T-cell (primary cell): ENCODE measurements at regions of chr1 and their contacts with region 1.

Region 1: DNA sequence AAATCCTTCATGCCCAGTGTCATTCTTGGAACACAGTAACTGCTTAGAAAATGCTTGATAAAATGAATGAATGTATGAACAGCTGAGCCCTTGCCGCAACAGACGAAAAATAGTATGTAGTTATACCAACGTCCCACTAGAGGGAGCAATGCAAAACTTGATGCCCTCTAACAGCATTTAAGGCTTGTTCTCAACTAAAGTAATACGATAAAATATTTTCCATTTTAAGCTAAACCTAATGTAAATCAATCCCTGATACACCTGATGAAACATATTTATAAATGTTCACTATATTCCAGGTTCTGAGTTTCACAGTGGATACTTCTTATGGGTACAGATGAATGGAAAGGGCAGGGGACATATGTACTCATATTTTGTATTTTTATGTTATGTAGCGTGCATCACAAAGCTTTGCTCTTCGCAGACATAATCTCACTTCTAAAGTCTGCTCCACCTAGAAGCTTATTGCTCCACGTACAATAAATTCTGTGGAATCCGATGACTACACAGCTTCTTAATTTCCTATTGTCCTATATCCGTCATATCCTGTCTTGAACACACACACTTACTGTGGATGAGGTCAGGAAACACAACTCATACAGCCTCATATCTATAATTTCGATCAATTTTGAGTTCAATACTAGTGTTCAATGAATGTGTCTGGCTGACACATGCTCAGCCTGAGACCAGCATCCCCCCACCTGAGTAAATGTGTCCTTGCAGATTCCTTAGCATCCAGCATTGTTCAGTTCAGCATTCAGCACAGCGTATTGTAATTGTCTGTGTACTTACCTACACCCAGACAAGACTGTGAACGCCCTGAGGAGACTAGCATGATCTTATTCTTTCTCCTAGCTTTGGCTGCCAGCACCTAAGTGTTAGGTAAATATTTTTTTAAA is 4.4 kb upstream of the UTP25 start:
- DNase-seq: peak in 8 of 35 experiments; percentile 2 to 79 (median 12)
- ATAC-seq: peak in 2 of 4 experiments; percentile 39 to 48
- H3K4me3 ChIP-seq: no peak overlapping the region
- H3K4me3 Mint-ChIP-seq: no peak overlapping the region
- H3K27ac ChIP-seq: no peak overlapping the region
- H3K27ac Mint-ChIP-seq: peak overlapping the region in 1 of 2 donors; percentile 21
- H3K4me1 ChIP-seq: peaks cover 0 to 8% of the 10 kb centered on the region in 2 experiments
- H3K4me1 Mint-ChIP-seq: peaks cover 21 to 22% (median 22%) of the 10 kb centered on the region in 3 donors
- H3K27me3 ChIP-seq: peaks cover 0 to 14% of the 10 kb centered on the region in 2 experiments
- H3K27me3 Mint-ChIP-seq: peaks cover 22 to 29% of the 10 kb centered on the region in 2 donors

Region 2: GRCh38 chr1:209810783-209811182 is 12.6 kb before region 1 on chr1:
- CTCF ChIA-PET with region 1: interaction called, 5 to 11 read pairs
- POLR2A ChIA-PET with region 1: interaction called in 1 of 2 experiments, 3 read pairs
- DNase-seq: no peak
- ATAC-seq: no peak
- H3K4me3 ChIP-seq: no peak overlapping the region
- H3K4me3 Mint-ChIP-seq: no peak overlapping the region
- H3K27ac ChIP-seq: no peak overlapping the region
- H3K27ac Mint-ChIP-seq: no peak overlapping the region
- H3K4me1 ChIP-seq: peaks cover 2 to 7% of the 10 kb centered on the region in 2 experiments
- H3K4me1 Mint-ChIP-seq: peaks cover 6 to 15% (median 12%) of the 10 kb centered on the region in 3 donors
- H3K27me3 ChIP-seq: peaks cover 0 to 9% of the 10 kb centered on the region in 2 experiments
- H3K27me3 Mint-ChIP-seq: no peaks in the 10 kb centered on the region